Mammary epithelial cell (primary cell): ENCODE measurements at regions of chr2 and their contacts with region 1.

Region 1: DNA sequence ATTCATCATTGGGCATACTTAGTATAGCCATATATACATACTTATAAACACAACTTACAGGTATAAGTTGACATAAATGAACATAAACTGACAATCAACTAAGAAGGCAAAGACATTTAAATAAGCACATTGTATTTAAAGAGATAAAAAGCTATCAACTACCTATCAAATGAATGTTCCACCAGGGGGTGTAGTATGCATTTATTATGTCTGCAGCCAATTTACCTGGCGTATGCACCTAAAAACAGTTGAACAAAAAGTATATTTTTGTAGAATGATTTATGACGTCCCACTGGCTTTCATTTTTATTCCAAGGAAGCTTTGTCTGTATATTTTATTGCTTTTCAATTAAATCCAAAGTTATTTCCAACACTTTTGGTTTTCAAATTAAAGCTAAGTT is 323.5 kb downstream of the AFF3 start:
- DNase-seq: peak; percentile 24
- H3K4me3 ChIP-seq: no peak overlapping the region
- H3K27ac ChIP-seq: no peak overlapping the region
- H3K4me1 ChIP-seq: no peaks in the 10 kb centered on the region
- H3K27me3 ChIP-seq: no peaks in the 10 kb centered on the region
- CTCF ChIP-seq: peak; percentile 21 to 51

Region 2: GRCh38 chr2:100013892-100014677 is 195.2 kb after region 1 on chr2:
- CTCF ChIA-PET with region 1: no interaction called
- dilution Hi-C with region 1: no loop called
- in situ Hi-C with region 1: no loop called
- intact Hi-C with region 1: no loop called
- DNase-seq: peak; percentile 42
- H3K4me3 ChIP-seq: no peak overlapping the region
- H3K27ac ChIP-seq: no peak overlapping the region
- H3K4me1 ChIP-seq: no peaks in the 10 kb centered on the region
- H3K27me3 ChIP-seq: no peaks in the 10 kb centered on the region
- CTCF ChIP-seq: peak in 1 of 2 donors; percentile 32

Region 3: DNA sequence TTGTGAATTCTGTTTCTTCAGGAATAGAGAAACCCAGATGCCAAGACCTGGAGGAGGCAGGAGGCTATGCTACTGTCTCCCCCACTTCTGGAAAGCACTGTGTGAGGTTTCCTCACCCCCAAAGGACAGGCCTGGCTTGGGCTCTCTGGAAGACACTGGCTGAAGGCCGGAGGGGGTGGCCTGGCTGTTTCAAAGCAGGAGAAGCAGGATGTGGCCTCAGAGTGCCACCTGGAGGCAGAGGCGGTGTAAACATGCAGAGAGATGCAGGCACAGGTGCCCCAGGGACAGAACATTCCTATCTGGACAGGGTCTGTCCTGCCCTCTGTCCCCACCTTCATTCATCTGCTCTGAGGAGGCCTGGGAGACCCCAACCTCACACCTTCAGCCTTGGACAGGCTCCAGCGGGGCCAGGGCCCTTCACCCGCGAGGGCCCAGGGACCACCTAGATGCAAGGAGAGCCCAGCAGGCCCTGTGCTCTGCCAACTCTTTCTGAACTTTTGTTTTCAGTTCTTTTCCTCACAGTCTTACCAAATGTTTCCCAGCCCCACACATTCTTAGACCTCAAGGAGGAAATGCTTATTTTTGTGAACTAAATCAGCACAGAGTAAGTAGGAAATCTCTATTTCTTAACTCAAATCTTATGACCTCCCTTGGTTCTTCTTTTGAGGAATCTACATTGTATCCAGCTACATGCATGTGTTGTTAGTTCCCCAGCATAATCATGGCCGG is 424.2 kb after region 1 on chr2:
- CTCF ChIA-PET with region 1: interaction called, 4 read pairs
- dilution Hi-C with region 1: no loop called
- in situ Hi-C with region 1: loop called (anchors 10 to 25 kb)
- intact Hi-C with region 1: loop called (anchors 1 kb)
- DNase-seq: peak; percentile 15
- H3K4me3 ChIP-seq: no peak overlapping the region
- H3K27ac ChIP-seq: no peak overlapping the region
- H3K4me1 ChIP-seq: no peaks in the 10 kb centered on the region
- H3K27me3 ChIP-seq: no peaks in the 10 kb centered on the region
- CTCF ChIP-seq: peak; percentile 65 to 87